CD8-positive, alpha-beta T cell (primary cell): ENCODE measurements at regions of chr22 and their contacts with region 1.

Region 1: DNA sequence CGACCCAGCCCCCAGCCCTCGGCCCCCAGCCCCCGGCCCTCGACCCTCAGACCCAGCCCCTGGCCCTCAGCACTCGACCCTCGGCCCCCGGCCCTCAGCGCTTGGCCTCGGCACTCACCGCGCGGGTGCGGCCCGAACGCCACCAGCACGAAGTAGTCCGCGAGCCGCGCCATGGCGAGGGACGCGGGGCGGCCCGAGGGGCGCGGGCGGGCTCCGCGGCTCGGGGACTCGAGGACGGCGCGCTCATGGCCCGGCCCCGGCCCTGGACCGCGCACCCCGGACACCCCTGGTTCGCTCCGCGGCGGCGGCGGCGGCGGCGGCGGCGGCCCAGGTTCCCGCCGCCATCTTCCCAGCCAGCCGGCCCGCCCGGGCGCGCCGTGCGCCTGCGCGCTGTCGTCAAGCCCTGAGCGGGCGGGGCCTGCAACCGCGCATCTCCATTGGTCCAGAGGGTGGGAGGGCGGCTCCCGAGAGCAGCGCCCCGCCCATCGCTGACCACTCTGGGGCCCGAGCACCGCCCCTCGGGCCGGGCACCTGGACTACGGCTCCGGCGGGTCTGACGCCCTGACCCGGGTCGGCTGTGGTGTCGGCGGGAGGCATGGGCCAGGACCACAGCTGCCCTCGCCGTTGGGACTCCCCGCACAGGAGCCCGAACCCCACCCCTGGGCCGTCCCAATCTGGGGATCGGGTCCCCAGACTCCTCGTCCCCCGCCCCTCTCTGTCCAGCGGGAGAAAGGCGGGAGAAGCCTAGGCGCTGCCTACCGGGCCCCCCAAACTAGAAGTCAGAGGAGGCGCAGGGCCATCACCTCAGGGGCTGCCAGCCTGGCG is at the start of gene SBF1:
- DNase-seq: peak; percentile 78 to 94 (median 86)
- ATAC-seq: peak; percentile 65
- H3K4me3 ChIP-seq: peak within 1 kb of the TSS; percentile 63 to 82
- H3K4me3 Mint-ChIP-seq: peak within 1 kb of the TSS; percentile 94
- H3K27ac ChIP-seq: peak within 1 kb of the TSS; percentile 62 to 73
- H3K27ac Mint-ChIP-seq: peak within 1 kb of the TSS; percentile 96
- H3K4me1 ChIP-seq: peaks cover 46% of the 10 kb centered on the region
- H3K4me1 Mint-ChIP-seq: peaks cover 45% of the 10 kb centered on the region
- H3K27me3 ChIP-seq: no peaks in the 10 kb centered on the region
- H3K27me3 Mint-ChIP-seq: no peaks in the 10 kb centered on the region
- CTCF ChIP-seq: no peak
- total RNA-seq, gene SBF1: 209 to 215 TPM

Region 2: DNA sequence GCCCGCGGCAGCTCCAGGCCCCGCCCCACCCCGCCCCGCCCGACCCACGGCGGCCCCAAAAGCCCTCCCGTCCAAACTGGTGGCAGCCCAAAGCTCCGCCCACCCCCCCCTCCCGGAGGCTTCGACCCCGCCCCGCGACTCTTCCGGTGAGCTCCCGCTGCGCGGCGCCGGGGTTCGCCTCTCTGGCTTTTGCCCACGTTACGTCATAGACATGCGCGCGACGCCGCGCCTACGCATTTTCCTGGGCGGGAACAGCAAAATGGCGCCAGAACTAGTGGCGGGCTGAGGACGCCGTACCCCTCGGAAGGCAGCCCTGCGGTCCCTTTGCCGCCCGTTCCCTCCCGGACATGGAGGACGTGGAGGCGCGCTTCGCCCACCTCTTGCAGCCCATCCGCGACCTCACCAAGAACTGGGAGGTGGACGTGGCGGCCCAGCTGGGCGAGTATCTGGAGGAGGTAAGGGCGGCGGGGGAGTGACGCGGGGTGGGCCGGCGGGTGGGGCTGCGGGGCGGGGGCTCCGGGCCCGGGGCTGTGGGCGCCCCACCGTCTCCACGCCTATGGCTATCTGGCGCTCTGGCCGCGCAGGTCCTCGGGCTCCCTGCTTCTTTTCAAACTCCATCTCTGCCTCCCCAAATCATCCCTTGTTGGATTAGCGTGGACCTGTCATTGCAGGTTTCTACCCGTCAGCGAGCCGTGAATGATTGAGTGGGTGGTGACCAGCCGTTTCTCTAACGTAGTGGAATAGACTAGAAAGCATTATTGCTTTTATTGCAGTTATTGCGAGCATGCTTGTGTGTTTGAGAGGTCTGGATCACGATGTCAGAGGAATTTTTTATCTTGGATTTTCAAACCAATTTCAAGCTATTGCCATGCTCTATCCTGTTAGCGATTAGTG is 33.4 kb after region 1 on chr22 and contains the start of gene NCAPH2:
- CTCF ChIA-PET with region 1: interaction called, 4 read pairs
- POLR2A ChIA-PET with region 1: interaction called, 20 read pairs
- intact Hi-C with region 1: loop called (anchors 1 kb)
- DNase-seq: peak in 8 of 9 experiments; percentile 94 to 99 (median 98)
- ATAC-seq: peak; percentile 74
- H3K4me3 ChIP-seq: peak within 1 kb of the TSS; percentile 88 to 97
- H3K4me3 Mint-ChIP-seq: peak within 1 kb of the TSS; percentile 96
- H3K27ac ChIP-seq: peak within 1 kb of the TSS; percentile 93
- H3K27ac Mint-ChIP-seq: peak within 1 kb of the TSS; percentile 99
- H3K4me1 ChIP-seq: peaks cover 23% of the 10 kb centered on the region
- H3K4me1 Mint-ChIP-seq: peaks cover 26% of the 10 kb centered on the region
- H3K27me3 ChIP-seq: no peaks in the 10 kb centered on the region
- H3K27me3 Mint-ChIP-seq: no peaks in the 10 kb centered on the region
- CTCF ChIP-seq: no peak
- total RNA-seq, gene NCAPH2: 206 to 209 TPM